HCT116 (cell line): ENCODE measurements at regions of chr6 and their contacts with region 1.

Region 1: DNA sequence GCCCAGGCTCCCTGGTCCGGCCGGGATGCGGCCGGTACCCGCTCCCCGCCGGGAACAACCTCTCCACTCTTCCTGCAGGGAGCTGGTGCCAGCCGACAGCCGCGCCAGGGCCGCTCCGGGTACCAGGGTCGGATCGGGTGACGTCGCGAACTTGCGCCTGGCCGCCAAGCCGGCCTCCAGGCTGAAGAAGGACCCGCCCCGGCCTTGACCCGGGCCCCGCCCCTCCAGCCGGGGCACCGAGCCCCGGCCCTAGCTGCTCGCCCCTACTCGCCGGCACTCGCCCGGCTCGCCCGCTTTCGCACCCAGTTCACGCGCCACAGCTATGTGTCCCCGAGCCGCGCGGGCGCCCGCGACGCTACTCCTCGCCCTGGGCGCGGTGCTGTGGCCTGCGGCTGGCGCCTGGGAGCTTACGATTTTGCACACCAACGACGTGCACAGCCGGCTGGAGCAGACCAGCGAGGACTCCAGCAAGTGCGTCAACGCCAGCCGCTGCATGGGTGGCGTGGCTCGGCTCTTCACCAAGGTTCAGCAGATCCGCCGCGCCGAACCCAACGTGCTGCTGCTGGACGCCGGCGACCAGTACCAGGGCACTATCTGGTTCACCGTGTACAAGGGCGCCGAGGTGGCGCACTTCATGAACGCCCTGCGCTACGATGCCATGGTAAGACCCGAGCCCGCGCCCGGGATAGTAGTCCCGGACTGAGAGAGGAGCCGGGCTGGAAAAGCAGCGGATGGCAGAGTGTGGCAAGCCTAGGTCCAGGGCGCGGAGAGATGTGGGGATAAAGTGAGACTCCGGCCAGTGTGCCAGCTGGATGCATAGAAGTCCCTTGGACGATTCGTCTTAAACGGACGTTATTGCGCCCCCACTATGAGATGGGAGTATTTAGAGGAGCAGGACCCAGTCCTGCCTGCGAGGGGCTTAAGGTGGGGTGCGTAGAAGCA is at the start of gene NT5E:
- DNase-seq: no peak
- ATAC-seq: peak; percentile 90
- H3K4me3 ChIP-seq: peak within 1 kb of the TSS; percentile 86 to 92
- H3K27ac ChIP-seq: peak within 1 kb of the TSS; percentile 70
- H3K4me1 ChIP-seq: peaks cover 20 to 57% of the 10 kb centered on the region in 2 experiments; a peak in 3 of 4 replicates
- H3K27me3 ChIP-seq: no peaks in the 10 kb centered on the region
- CTCF ChIP-seq: no peak; a peak in 1 of 6 replicates
- POLR2A ChIP-seq: no peak
- RAD21 ChIP-seq: 0 out of 2 replicates have a peak, but pooled peaks have one; percentile 19
- total RNA-seq, gene NT5E: 68.2 TPM

Region 2: GRCh38 chr6:85460921-85461797 is 11.1 kb after region 1 on chr6:
- CTCF ChIA-PET with region 1: no interaction called
- POLR2A ChIA-PET with region 1: interaction called, 45 read pairs
- RAD21 ChIA-PET with region 1: interaction called in 1 of 2 experiments, 4 read pairs
- intact Hi-C with region 1: no loop called
- DNase-seq: no peak
- ATAC-seq: no peak
- H3K4me3 ChIP-seq: no peak overlapping the region
- H3K27ac ChIP-seq: no peak overlapping the region
- H3K4me1 ChIP-seq: peaks cover 61 to 100% of the 10 kb centered on the region in 2 experiments
- H3K27me3 ChIP-seq: no peaks in the 10 kb centered on the region
- CTCF ChIP-seq: no peak
- POLR2A ChIP-seq: no peak
- RAD21 ChIP-seq: no peak